ENCODE measurements at regions of chr11 and their contacts with region 1.

Region 1: DNA sequence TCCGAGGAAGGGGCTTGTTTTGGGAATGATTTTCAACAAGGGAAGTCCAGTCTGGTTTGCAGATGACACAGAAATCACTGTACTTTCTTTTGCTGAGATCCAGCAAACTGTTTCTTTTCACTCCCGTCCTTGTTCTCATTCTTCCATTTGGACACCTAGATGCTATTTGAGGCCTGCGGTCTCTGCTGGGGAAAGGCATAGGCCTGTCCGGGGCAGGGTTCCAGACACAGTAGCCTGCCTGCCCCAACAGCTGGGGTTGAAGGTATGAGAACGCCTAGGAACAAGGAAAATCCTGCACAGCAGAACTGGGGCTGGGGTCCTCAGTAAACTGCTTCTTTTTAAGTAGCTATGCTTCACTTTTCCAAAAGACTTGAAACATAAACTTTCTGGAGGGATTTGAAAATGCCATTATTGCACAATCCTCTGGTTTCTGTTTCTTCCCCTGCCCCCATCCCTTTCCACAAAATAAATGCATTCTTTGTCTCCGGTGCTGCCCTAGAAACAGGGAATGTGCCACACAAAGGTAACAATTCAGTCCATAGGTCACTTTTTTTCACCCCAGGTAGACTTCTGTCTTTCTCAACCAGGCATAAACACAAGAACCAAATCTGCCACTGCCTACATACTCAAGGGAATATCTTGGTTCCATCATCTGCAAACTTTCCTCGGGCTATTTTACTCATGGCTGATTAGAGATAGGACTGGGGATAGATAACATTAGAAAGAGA is 174.8 kb upstream of the MTMR2 start:
- DNase-seq: peak; percentile 46
- H3K4me3 Mint-ChIP-seq: peak overlapping the region; percentile 54
- H3K27ac Mint-ChIP-seq: peak overlapping the region; percentile 90
- H3K4me1 Mint-ChIP-seq: peaks cover 48% of the 10 kb centered on the region
- H3K27me3 Mint-ChIP-seq: no peaks in the 10 kb centered on the region
- CTCF ChIP-seq: no peak

Region 2: DNA sequence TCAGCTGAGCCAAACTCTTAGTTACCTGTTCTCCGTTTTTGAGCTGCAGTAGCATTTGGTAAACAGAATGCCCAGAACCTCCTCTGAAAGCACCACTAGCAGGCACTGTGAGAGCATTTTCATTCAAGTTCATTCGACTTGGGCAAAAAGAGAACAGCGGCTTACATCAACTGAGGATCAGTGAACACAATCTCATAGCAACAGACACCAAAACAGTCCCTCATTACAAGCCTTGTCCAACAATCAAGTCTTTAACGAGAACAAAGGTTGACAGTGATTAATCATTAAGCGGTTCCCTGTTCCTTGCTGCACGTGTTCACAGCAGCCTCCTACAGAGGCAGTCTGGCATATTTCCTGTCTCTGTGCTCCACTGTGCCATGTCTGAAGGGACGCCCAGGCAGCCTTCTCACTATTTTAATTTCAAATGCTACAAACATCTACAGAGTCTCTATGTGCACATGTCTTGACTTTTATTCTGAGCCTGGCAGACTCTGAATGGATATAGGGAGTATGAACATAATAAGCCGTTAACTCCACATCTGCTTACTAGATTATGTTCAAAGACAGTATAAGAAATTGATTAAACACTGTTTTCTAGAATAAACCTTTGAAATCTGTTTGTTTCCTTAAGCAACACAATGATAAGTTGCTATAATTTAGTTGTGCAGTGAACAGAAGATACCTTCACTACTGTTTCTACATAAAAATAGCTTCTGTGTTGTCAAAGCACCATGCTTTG is 86.4 kb before region 1 on chr11:
- CTCF ChIA-PET with region 1: no interaction called
- intact Hi-C with region 1: loop called (anchors 5 kb)
- DNase-seq: peak; percentile 60
- H3K4me3 Mint-ChIP-seq: no peak overlapping the region
- H3K27ac Mint-ChIP-seq: peak overlapping the region; percentile 75
- H3K4me1 Mint-ChIP-seq: peaks cover 38% of the 10 kb centered on the region
- H3K27me3 Mint-ChIP-seq: no peaks in the 10 kb centered on the region
- CTCF ChIP-seq: no peak

Region 3: DNA sequence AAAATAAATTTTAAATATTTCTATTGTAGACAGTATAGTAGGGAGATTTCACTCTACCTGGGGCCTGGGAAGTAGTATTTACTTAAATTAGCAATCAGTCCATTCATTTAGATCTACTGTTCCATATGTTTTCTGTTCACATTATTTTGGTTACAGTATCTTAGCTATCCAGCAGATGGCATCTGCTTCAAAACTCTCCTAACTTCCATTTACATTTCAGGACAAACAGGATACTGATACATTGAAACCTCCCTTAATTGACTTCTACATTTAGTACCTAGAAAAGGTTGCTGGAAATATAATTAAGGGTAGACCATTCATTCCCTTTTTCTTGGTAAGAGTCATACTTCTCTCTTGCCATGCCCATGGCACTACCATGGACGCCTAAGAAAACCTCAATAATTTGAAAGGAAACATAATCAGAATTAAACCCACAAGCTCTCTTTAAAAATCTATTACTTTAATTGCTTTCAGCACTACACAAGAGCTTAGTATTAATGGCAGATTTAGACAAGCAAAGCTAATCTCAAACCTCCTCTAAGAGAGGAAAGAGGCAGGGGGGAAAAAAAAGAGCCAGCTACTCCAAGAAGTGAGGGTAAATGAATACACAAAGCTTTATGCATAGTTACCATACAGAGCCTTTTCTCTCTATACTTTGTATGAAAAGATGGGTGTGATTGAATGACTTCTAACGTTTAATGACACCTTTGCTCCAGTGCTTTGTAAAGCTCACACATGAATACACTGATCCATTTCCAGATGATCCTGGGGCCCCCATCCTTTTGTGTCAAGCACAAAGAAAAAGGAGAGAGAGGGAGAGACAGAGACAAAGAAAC is 43.6 kb before region 1 on chr11:
- CTCF ChIA-PET with region 1: no interaction called
- intact Hi-C with region 1: loop called (anchors 2 kb)
- DNase-seq: no peak
- H3K4me3 Mint-ChIP-seq: no peak overlapping the region
- H3K27ac Mint-ChIP-seq: no peak overlapping the region
- H3K4me1 Mint-ChIP-seq: peaks cover 44% of the 10 kb centered on the region
- H3K27me3 Mint-ChIP-seq: no peaks in the 10 kb centered on the region
- CTCF ChIP-seq: no peak

Region 4: GRCh38 chr11:96074551-96075310 is 23.9 kb before region 1 on chr11:
- CTCF ChIA-PET with region 1: no interaction called
- intact Hi-C with region 1: loop called (anchors 2 kb)
- DNase-seq: no peak
- H3K4me3 Mint-ChIP-seq: peak overlapping the region; percentile 7
- H3K27ac Mint-ChIP-seq: peak overlapping the region; percentile 82
- H3K4me1 Mint-ChIP-seq: peaks cover 52% of the 10 kb centered on the region
- H3K27me3 Mint-ChIP-seq: no peaks in the 10 kb centered on the region
- CTCF ChIP-seq: no peak

Region 5: GRCh38 chr11:96306933-96307775 is 208.5 kb after region 1 on chr11:
- CTCF ChIA-PET with region 1: no interaction called
- intact Hi-C with region 1: no loop called
- DNase-seq: peak; percentile 82
- H3K4me3 Mint-ChIP-seq: peak overlapping the region; percentile 60
- H3K27ac Mint-ChIP-seq: peak overlapping the region; percentile 98
- H3K4me1 Mint-ChIP-seq: peaks cover 61% of the 10 kb centered on the region
- H3K27me3 Mint-ChIP-seq: no peaks in the 10 kb centered on the region
- CTCF ChIP-seq: no peak